CD8-positive, alpha-beta T cell (primary cell): ENCODE measurements at regions of chr17 and their contacts with region 1.

Region 1: GRCh38 chr17:79789534-79790353 is 7.1 kb downstream of the CBX8 start:
- DNase-seq: peak in 2 of 9 experiments; percentile 54 to 56
- ATAC-seq: peak; percentile 24
- H3K4me3 ChIP-seq: no peak overlapping the region
- H3K4me3 Mint-ChIP-seq: peak overlapping the region; percentile 29
- H3K27ac ChIP-seq: no peak overlapping the region
- H3K27ac Mint-ChIP-seq: no peak overlapping the region
- H3K4me1 ChIP-seq: peaks cover 27% of the 10 kb centered on the region
- H3K4me1 Mint-ChIP-seq: peaks cover 14% of the 10 kb centered on the region
- H3K27me3 ChIP-seq: peaks cover 33 to 39% of the 10 kb centered on the region in 2 experiments
- H3K27me3 Mint-ChIP-seq: peaks cover 49% of the 10 kb centered on the region
- CTCF ChIP-seq: peak; percentile 56

Region 2: DNA sequence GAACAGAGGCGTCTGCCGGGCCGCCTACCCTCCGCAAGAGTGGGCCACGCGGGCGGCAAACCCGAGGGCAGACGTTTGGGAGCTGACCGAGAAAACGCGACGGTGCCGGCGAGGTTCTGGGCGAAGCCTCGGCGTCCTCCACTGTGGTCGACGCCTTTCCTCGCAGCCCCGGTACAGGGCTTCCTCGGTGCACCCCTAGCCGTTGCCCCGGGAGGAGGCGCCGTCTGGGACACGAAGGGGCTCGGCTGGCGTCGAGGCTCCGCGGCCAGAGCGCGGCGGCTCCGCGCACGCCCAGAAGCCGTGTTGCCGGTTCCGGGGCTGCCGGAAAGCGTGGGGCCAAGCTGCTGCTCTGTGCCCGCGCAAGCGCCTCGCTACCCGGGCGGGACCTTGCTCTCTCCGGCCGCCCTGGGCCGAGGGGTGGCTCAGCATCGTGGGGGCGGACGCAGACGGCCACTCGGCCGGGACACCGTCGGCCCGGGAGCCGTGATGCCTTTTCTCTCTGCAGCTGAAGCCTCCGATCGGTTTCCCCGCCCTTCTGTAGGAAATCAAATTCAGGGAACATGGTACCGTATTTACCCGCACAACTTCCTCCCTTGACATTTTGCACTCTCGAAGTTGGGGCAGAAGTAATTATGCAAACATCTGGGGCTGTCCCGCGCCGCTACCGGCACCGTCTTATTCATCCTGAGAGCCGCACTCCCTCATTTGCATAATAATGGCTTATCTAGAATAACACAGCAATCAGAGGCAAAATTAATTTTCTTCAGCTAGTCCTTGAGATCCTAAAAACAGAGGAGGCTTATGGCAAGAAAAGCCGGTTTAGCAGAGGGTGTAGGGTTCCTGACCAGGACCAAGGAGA is 14.5 kb after region 1 on chr17:
- CTCF ChIA-PET with region 1: interaction called, 12 read pairs
- POLR2A ChIA-PET with region 1: no interaction called
- intact Hi-C with region 1: no loop called
- DNase-seq: peak in 3 of 9 experiments; percentile 49 to 67 (median 52)
- ATAC-seq: peak; percentile 47
- H3K4me3 ChIP-seq: no peak overlapping the region
- H3K4me3 Mint-ChIP-seq: peak overlapping the region; percentile 66
- H3K27ac ChIP-seq: no peak overlapping the region
- H3K27ac Mint-ChIP-seq: no peak overlapping the region
- H3K4me1 ChIP-seq: peaks cover 51% of the 10 kb centered on the region
- H3K4me1 Mint-ChIP-seq: peaks cover 44% of the 10 kb centered on the region
- H3K27me3 ChIP-seq: peaks cover 96% of the 10 kb centered on the region in 2 experiments
- H3K27me3 Mint-ChIP-seq: peaks cover 79% of the 10 kb centered on the region
- CTCF ChIP-seq: no peak

Region 3: GRCh38 chr17:79915850-79916430 is 126.2 kb after region 1 on chr17:
- CTCF ChIA-PET with region 1: interaction called, 11 read pairs
- POLR2A ChIA-PET with region 1: no interaction called
- intact Hi-C with region 1: no loop called
- DNase-seq: peak in 3 of 9 experiments; percentile 15 to 42 (median 33)
- ATAC-seq: no peak
- H3K4me3 ChIP-seq: no peak overlapping the region
- H3K4me3 Mint-ChIP-seq: no peak overlapping the region
- H3K27ac ChIP-seq: no peak overlapping the region
- H3K27ac Mint-ChIP-seq: no peak overlapping the region
- H3K4me1 ChIP-seq: no peaks in the 10 kb centered on the region
- H3K4me1 Mint-ChIP-seq: no peaks in the 10 kb centered on the region
- H3K27me3 ChIP-seq: no peaks in the 10 kb centered on the region
- H3K27me3 Mint-ChIP-seq: peaks cover 12% of the 10 kb centered on the region
- CTCF ChIP-seq: no peak

Region 4: GRCh38 chr17:80029258-80029974 is 239.7 kb after region 1 on chr17:
- CTCF ChIA-PET with region 1: no interaction called
- POLR2A ChIA-PET with region 1: no interaction called
- intact Hi-C with region 1: no loop called
- DNase-seq: no peak
- ATAC-seq: no peak
- H3K4me3 ChIP-seq: no peak overlapping the region
- H3K4me3 Mint-ChIP-seq: no peak overlapping the region
- H3K27ac ChIP-seq: no peak overlapping the region
- H3K27ac Mint-ChIP-seq: no peak overlapping the region
- H3K4me1 ChIP-seq: no peaks in the 10 kb centered on the region
- H3K4me1 Mint-ChIP-seq: no peaks in the 10 kb centered on the region
- H3K27me3 ChIP-seq: peaks cover 0 to 4% of the 10 kb centered on the region in 2 experiments
- H3K27me3 Mint-ChIP-seq: peaks cover 2% of the 10 kb centered on the region
- CTCF ChIP-seq: no peak